GM18951 (cell line): ENCODE measurements at regions of chr3 and their contacts with region 1.

Region 1: GRCh38 chr3:140842984-140843649 is 98.5 kb upstream of the SLC25A36 start:
- POLR2A ChIP-seq: no peak

Region 2: GRCh38 chr3:140753865-140754754 is 89.0 kb before region 1 on chr3:
- in situ Hi-C with region 1: loop called (anchors 10 kb)
- POLR2A ChIP-seq: no peak

Region 3: GRCh38 chr3:141000027-141000663 is 157.0 kb after region 1 on chr3:
- in situ Hi-C with region 1: no loop called
- POLR2A ChIP-seq: no peak